Dorsolateral prefrontal cortex (tissue), 120 donors: ENCODE measurements at regions of chrX and their contacts with region 1.

Region 1: DNA sequence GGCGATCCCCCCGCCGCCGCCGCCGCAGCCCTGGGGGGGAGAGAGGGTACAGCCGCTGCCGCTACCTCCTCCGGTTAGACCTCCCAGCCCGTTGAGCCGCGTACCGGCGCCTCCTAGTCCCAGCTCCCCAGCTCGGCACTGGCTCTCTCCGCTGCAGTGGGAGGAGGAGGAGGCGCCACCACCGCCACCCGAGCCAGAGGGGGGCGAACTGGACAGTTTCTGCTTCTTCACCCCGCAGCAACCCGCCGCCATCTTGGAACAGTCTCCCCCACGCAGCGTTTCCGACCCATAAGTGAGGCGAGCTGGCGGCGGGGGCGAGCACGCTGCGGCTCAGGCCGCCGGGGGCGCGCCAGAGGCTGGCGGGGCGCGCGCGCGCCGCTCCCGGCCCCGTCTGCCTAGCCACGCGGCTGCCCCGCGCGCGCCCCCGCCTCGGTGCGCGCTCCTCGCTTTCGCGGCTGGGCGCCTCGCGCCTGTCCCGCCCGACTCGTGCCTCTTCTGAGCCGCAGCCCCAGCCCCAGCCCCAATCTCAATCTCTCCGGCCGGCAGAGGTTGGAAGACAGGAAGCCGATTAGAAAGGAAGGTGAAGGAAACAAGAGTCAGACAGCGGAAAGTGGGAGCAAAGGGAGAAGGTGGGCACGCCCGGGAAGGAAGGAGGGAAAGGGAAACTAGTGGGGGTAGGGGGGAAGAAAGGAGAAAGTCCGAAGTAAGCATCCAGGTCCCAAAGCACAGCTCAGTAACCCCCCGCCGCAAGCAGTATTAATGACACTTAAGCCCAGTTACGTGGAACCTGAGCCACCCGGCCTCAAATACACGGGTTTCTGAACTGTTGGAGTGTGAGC is at the start of gene AMMECR1:
- DNase-seq: peak; percentile 47 to 81 (median 70)
- H3K4me3 ChIP-seq: peak within 1 kb of the TSS; percentile 47 to 82 (median 69)
- H3K27ac ChIP-seq: peak within 1 kb of the TSS in 50 of 59 donors; percentile 10 to 90 (median 69)
- H3K27me3 ChIP-seq: peaks cover 0 to 55% (median 11%) of the 10 kb centered on the region in 45 donors
- CTCF ChIP-seq: peak in 4 of 56 donors; percentile 3 to 36 (median 10)
- total RNA-seq, gene AMMECR1: 2.4 to 8.1 (median 4.5) TPM

Region 2: DNA sequence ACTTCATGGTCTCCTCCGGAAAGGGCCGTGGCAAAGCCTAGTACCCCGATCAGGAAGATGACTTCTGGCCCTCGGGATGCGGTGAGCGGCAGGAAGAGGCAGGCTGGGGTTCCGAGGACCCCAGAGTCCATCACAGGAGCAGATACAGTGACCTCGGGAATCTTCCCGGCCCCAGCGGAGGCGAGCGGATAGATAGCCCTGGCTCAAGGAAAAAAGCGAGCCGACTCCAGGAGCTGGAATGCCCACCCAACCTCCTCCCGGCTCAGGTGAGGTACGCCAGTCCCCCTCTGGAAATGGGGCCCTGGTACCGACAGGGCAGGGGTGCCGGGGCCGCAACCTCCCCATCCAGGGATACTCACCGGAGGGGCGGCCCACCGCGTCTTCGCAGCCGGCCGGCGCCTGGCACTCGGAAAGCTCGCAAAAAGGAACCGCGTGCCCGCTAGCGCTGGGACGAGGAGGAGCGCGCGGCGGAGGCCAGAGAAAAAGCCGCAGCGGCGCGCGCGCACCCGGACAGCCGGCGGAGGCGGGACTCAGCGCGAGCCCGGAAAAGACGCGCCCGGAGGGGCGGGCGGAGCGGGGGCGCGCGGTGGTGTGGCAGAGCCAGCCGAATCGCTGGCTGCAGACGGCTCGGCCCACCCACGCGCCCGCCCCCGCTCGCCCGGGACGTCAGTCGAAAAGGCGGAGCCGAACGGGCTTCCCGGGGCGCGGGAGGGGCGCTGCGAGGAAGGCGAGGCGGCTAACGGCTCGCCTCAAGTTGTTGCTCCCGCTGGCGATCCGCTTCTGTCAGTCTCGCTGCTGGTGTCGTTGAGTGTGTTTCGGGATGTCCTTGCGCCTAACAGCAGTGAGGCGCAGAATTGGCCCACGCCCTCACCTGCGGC is 585.0 kb before region 1 on chrX and contains the start of gene ACSL4:
- intact Hi-C with region 1: loop called (anchors 5 kb)
- DNase-seq: peak; percentile 66 to 91 (median 84)
- H3K4me3 ChIP-seq: peak within 1 kb of the TSS; percentile 42 to 85 (median 72)
- H3K27ac ChIP-seq: peak within 1 kb of the TSS in 58 of 59 donors; percentile 24 to 93 (median 81)
- H3K27me3 ChIP-seq: peaks cover 0 to 40% (median 5%) of the 10 kb centered on the region in 45 donors
- CTCF ChIP-seq: peak in 5 of 56 donors; percentile 10 to 25 (median 12)
- total RNA-seq, gene ACSL4: 24.2 to 101 (median 62.2) TPM

Region 3: DNA sequence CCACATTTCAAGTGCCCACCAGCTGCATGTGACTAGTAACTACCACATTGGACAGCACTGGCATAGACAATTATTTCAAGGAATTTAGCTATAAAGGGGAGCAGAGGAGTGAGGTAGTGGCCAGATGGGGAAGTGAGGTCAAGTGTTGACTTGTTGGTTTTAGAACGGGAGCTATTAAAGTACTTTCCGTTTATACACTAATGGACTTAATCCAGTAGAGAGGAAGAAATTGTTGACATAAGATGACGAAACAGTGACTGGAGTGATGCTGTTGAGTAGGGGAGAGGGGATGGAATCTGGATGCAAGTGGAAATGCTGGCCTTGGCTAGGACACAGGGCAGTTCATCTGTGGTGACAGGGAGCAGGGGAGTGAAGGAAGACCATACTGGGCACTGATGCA is 154.6 kb before region 1 on chrX:
- intact Hi-C with region 1: loop called in 1 of 2 experiments (anchors 5 kb)
- DNase-seq: no peak
- H3K4me3 ChIP-seq: no peak overlapping the region
- H3K27ac ChIP-seq: no peak overlapping the region
- H3K27me3 ChIP-seq: peaks cover 0 to 59% (median 8%) of the 10 kb centered on the region in 45 donors
- CTCF ChIP-seq: no peak

Region 4: DNA sequence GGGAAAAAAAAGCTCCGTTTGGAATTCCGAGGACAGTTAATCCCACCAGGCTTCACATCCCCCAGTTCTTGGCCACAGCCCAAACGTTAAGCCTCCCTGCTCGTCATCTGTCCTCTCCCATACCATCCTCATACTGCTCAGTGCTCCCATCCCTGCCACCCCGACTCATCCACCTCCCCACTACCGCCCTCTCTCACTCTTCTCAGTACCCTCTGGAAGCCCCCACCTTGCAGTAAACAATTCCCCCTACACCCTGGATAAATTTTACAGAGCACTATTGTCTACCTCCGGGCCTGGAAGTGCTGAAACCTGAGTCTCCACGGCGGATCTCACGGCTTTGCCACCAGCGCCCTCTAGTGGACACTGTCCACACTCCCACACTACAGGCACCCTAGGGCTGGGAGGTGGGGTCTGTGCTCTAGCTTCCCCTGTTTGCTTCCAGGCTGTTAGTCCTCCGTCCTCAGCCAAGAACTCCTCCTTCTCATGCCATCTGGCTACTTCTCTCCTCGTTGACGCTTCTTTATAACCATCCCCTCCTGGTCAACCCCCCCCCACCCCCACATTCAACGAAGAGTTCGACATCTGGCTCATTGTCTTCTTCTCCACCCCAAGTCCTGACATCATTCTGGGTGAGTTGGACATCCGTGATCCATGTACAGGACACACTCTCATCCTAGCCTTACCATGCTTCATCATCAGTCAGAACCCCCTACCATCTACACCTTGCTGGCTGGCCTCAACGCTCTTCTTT is 95.1 kb after region 1 on chrX:
- intact Hi-C with region 1: loop called in 1 of 2 experiments (anchors 10 kb)
- DNase-seq: peak in 9 of 10 donors; percentile 47 to 70 (median 61)
- H3K4me3 ChIP-seq: peak overlapping the region in 14 of 59 donors; percentile 6 to 40 (median 22)
- H3K27ac ChIP-seq: peak overlapping the region in 1 of 59 donors; percentile 58
- H3K27me3 ChIP-seq: peaks cover 0 to 82% (median 22%) of the 10 kb centered on the region in 45 donors
- CTCF ChIP-seq: peak; percentile 29 to 89 (median 78)